ENCODE measurements at regions of chr3 and their contacts with region 1.

Region 1: GRCh38 chr3:149752051-149752787 is at the start of gene COMMD2:
- DNase-seq: peak; percentile 65 to 87
- ATAC-seq: peak; percentile 95 to 98 (median 97)
- H3K4me3 ChIP-seq: peak within 1 kb of the TSS; percentile 64
- H3K4me3 Mint-ChIP-seq: peak within 1 kb of the TSS; percentile 98
- H3K27ac ChIP-seq: peak within 1 kb of the TSS; percentile 48
- H3K27ac Mint-ChIP-seq: peak within 1 kb of the TSS; percentile 84 to 95
- H3K4me1 ChIP-seq: peaks cover 4% of the 10 kb centered on the region
- H3K4me1 Mint-ChIP-seq: peaks cover 24 to 27% of the 10 kb centered on the region in 2 donors
- H3K27me3 ChIP-seq: no peaks in the 10 kb centered on the region
- H3K27me3 Mint-ChIP-seq: peaks cover 14 to 15% of the 10 kb centered on the region in 2 donors
- CTCF ChIP-seq: peak; percentile 52
- total RNA-seq, gene COMMD2: 39.9 to 42.9 (median 40.0) TPM

Region 2: DNA sequence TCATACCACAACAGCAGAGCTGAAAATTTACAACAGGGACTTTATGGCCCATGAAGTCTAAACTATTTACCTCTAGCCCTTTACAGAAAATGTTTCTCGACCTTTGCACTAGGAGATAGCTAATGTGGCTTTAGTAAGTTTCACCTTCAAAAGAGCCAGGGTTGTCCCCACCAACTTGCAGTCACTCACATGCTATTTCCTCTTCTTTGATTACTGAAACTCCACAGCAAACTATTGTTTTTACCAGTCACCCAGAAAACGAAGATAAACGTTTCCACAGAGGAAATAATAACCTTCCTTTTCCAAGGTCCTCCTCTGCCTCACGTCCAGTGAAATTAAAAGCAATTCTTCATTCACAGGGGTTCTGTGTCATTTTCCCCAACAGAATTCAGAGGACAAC is 142.6 kb before region 1 on chr3:
- intact Hi-C with region 1: no loop called
- DNase-seq: no peak
- ATAC-seq: no peak
- H3K4me3 ChIP-seq: no peak overlapping the region
- H3K4me3 Mint-ChIP-seq: no peak overlapping the region
- H3K27ac ChIP-seq: no peak overlapping the region
- H3K27ac Mint-ChIP-seq: no peak overlapping the region
- H3K4me1 ChIP-seq: no peaks in the 10 kb centered on the region
- H3K4me1 Mint-ChIP-seq: no peaks in the 10 kb centered on the region
- H3K27me3 ChIP-seq: no peaks in the 10 kb centered on the region
- H3K27me3 Mint-ChIP-seq: peaks cover 3 to 9% of the 10 kb centered on the region in 2 donors
- CTCF ChIP-seq: no peak

Region 3: GRCh38 chr3:149812606-149813366 is 60.6 kb after region 1 on chr3 and contains the start of gene RNF13:
- intact Hi-C with region 1: loop called (anchors 1 kb)
- DNase-seq: peak; percentile 93 to 95
- ATAC-seq: peak; percentile 93 to 98 (median 95)
- H3K4me3 ChIP-seq: peak within 1 kb of the TSS; percentile 83
- H3K4me3 Mint-ChIP-seq: peak within 1 kb of the TSS; percentile 96
- H3K27ac ChIP-seq: peak within 1 kb of the TSS; percentile 99
- H3K27ac Mint-ChIP-seq: peak within 1 kb of the TSS; percentile 96 to 98
- H3K4me1 ChIP-seq: peaks cover 13% of the 10 kb centered on the region
- H3K4me1 Mint-ChIP-seq: peaks cover 53% of the 10 kb centered on the region in 2 donors
- H3K27me3 ChIP-seq: no peaks in the 10 kb centered on the region
- H3K27me3 Mint-ChIP-seq: peaks cover 6 to 12% of the 10 kb centered on the region in 2 donors
- CTCF ChIP-seq: no peak
- total RNA-seq, gene RNF13: 57.4 to 69.7 (median 66.6) TPM